WTC11 (cell line): ENCODE measurements at regions of chr16 and their contacts with region 1.

Region 1: GRCh38 chr16:69351309-69352027 is at the start of gene TMED6:
- DNase-seq: no peak
- ATAC-seq: no peak
- H3K4me3 Mint-ChIP-seq: no peak within 1 kb of the TSS
- H3K27ac Mint-ChIP-seq: peak within 1 kb of the TSS; percentile 39
- H3K4me1 Mint-ChIP-seq: no peaks in the 10 kb centered on the region
- H3K27me3 Mint-ChIP-seq: no peaks in the 10 kb centered on the region
- CTCF ChIP-seq: no peak
- total RNA-seq, gene TMED6: 0.44 to 0.72 TPM (median 0.62 TPM) in 3 replicates

Region 2: GRCh38 chr16:69073161-69073669 is 278.3 kb before region 1 on chr16:
- CTCF ChIA-PET with region 1: no interaction called
- POLR2A ChIA-PET with region 1: interaction called, 14 read pairs
- DNase-seq: no peak
- ATAC-seq: no peak
- H3K4me3 Mint-ChIP-seq: peak overlapping the region; percentile 55
- H3K27ac Mint-ChIP-seq: peak overlapping the region; percentile 96
- H3K4me1 Mint-ChIP-seq: peaks cover 65% of the 10 kb centered on the region
- H3K27me3 Mint-ChIP-seq: no peaks in the 10 kb centered on the region
- CTCF ChIP-seq: no peak

Region 3: DNA sequence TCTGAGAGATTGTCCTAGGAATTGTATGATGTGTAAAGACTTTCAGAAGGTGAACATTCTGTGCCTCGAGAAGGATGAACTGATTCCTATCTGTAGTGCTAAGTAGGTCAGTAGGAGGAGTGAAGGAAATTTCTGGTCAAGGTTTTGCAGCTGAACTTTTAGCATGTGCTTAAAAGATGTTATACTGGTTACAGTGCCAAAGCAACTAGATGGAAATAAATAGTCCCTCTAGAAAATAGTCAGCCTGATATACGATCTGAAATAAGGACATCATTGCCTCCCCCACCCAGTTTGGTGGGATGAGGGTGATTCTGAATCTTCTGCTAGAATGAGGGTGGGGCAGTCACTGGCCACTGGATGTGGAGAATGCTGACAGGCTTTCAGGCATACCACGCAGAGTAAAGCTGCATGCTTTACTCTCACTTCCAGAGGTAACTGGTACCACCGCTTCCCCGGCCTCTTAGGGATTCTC is 97.6 kb before region 1 on chr16:
- CTCF ChIA-PET with region 1: no interaction called
- POLR2A ChIA-PET with region 1: no interaction called
- DNase-seq: no peak
- ATAC-seq: no peak
- H3K4me3 Mint-ChIP-seq: no peak overlapping the region
- H3K27ac Mint-ChIP-seq: no peak overlapping the region
- H3K4me1 Mint-ChIP-seq: no peaks in the 10 kb centered on the region
- H3K27me3 Mint-ChIP-seq: no peaks in the 10 kb centered on the region
- CTCF ChIP-seq: no peak

Region 4: DNA sequence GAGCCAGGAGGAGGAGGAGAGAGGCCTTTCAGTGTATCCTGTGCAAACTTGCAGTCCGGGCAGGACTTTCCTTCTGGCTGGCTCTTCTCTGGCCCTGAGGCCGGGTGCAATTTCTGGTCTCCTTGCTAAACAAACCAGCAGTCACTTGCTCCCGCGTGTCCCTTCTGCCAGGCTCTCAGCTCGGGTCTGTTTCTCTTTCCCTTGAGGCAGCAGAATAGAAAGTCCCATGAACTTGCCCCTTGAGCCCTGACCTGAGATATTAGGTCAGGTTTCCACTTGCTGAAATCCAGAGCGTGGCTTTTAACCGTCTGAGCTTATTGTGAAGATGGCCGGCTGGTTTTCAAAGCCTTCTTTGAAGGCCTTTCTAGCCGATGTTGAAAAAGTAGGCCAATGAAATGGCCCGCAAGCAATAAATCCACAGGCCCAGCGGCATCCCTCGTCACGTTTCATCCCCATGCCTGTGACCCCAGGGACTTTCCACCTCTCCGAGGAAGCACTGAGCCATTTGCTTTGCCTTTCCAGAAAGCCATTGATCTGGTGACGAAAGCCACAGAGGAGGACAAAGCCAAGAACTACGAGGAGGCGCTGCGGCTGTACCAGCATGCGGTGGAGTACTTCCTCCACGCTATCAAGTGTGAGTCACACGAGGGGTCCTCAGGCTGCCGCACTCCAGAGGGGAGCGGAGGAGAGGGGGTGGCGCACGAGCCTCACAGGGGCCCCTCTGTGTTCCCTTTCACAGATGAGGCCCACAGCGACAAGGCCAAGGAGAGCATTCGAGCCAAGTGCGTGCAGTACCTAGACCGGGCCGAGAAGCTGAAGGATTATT is 35.8 kb before region 1 on chr16:
- CTCF ChIA-PET with region 1: no interaction called
- POLR2A ChIA-PET with region 1: no interaction called
- DNase-seq: no peak
- ATAC-seq: no peak
- H3K4me3 Mint-ChIP-seq: no peak overlapping the region
- H3K27ac Mint-ChIP-seq: 0 out of 2 replicates have a peak overlapping the region, but pooled peaks have one; percentile 41
- H3K4me1 Mint-ChIP-seq: peaks cover 5% of the 10 kb centered on the region
- H3K27me3 Mint-ChIP-seq: no peaks in the 10 kb centered on the region
- CTCF ChIP-seq: no peak

Region 5: GRCh38 chr16:69386596-69386995 is 35.1 kb after region 1 on chr16:
- CTCF ChIA-PET with region 1: no interaction called
- POLR2A ChIA-PET with region 1: no interaction called
- DNase-seq: no peak
- ATAC-seq: no peak
- H3K4me3 Mint-ChIP-seq: peak overlapping the region; percentile 85
- H3K27ac Mint-ChIP-seq: no peak overlapping the region
- H3K4me1 Mint-ChIP-seq: peaks cover 3% of the 10 kb centered on the region
- H3K27me3 Mint-ChIP-seq: no peaks in the 10 kb centered on the region
- CTCF ChIP-seq: no peak